ENCODE measurements at regions of chr11 and their contacts with region 1.

Region 1: DNA sequence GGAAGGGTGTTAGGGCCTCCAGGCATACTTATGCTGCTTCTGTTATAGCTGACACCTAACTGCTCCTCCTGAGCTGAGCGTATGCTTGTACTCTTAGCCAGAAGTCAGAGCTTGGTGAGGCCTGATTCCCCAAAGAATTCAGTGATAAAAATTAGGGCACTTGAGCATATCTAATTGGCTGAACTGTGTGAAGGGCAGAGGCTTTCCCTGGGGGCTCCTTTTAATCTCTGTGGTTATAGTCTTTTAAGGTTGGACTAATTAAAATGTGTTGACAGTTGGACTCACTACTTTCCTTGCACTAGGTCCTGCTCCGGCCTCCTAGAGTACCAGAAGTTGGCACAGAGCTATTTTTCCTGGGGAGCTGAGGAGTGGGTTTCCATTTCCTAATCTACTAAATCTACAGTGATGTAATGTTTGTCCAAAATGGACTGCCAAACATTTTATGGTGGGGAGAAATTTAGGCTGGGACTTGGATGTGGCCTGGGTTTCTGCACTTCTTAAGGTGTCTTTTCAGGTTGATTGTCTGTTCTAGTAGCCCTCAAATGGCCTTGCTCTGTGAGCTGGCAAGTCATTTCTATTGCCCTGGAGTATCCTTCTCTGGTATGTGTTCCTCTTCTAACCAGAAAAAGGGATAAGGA is 18.4 kb downstream of the STIM1 start:
- DNase-seq: no peak
- ATAC-seq: no peak
- H3K4me3 ChIP-seq: no peak overlapping the region
- H3K27ac ChIP-seq: no peak overlapping the region
- H3K4me1 ChIP-seq: peaks cover 50% of the 10 kb centered on the region
- H3K27me3 ChIP-seq: no peaks in the 10 kb centered on the region
- CTCF ChIP-seq: no peak
- EP300 ChIP-seq: no peak
- POLR2A ChIP-seq: no peak
- RAD21 ChIP-seq: no peak

Region 2: DNA sequence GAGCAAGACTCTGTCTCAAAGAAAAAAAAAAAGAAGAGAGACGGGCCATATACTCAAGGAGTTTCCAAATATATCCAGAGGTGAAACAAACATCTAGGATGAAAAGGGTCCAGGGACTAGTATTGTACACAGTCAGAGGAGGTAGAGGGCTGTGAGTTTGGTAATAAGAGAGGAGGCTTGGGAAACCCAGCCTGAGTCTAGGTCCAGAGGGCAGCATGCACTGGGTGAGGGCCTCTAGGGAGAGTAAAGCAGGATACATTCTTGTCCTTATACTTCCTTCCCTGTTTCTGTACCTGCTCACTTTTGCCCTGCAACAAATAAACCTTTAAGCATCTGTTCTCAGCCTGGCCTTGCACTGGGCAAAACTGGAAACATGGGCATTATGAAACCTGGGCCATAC is 13.2 kb after region 1 on chr11:
- CTCF ChIA-PET with region 1: interaction called, 1,047 read pairs
- POLR2A ChIA-PET with region 1: interaction called, 24 read pairs
- RAD21 ChIA-PET with region 1: interaction called, 33 read pairs
- SMC1A ChIA-PET with region 1: interaction called, 153 read pairs
- in situ Hi-C with region 1: no loop called
- intact Hi-C with region 1: no loop called
- DNase-seq: no peak
- ATAC-seq: no peak
- H3K4me3 ChIP-seq: no peak overlapping the region
- H3K27ac ChIP-seq: no peak overlapping the region
- H3K4me1 ChIP-seq: peaks cover 28% of the 10 kb centered on the region
- H3K27me3 ChIP-seq: no peaks in the 10 kb centered on the region
- CTCF ChIP-seq: no peak
- EP300 ChIP-seq: no peak
- POLR2A ChIP-seq: no peak
- RAD21 ChIP-seq: no peak

Region 3: DNA sequence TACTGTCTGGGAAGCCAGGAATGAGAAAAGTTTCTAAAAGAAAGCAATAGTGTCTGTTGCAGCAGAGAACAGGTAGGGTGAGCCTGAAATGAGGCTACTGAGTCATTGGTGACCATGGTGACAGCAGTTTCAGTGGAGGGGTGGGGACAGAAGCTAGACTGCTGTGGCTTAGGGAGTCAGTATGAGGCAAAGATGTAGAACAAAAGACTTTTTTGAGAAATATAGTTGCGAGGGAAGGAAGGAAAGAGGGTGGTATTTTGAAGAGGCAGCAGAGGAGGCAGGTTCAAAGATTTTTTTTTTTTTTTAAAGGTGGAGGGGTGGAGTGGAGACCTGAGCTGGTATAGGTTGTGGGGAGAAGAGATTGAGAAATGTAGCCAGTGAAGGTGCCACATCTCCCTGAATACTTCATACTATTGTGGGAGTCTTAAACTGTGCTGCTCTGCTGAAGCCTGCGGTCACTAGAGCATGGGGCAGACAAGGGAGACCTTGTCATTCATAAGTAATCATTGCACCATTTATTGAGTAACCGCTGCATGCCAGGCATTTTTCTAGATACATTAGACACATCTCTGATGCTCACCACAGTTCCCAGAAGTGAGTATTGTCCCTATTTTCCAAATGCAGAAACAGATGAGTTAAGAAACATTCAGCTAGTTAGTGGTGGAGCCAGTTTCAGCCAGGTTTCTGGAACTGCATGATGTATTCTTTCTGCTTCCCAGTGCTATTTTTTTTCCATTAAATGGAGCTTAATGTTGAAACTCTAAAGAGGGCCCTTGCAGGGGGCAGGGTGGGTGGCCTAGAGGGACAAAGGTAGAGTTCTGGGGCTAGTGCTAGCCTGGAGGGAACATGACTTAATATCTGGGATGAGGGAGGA is 31.5 kb after region 1 on chr11:
- CTCF ChIA-PET with region 1: interaction called, 5 read pairs
- POLR2A ChIA-PET with region 1: interaction called, 15 read pairs
- RAD21 ChIA-PET with region 1: interaction called, 8 read pairs
- SMC1A ChIA-PET with region 1: interaction called, 10 read pairs
- in situ Hi-C with region 1: no loop called
- intact Hi-C with region 1: no loop called
- DNase-seq: no peak
- ATAC-seq: peak; percentile 89
- H3K4me3 ChIP-seq: no peak overlapping the region
- H3K27ac ChIP-seq: no peak overlapping the region
- H3K4me1 ChIP-seq: peaks cover 51% of the 10 kb centered on the region
- H3K27me3 ChIP-seq: no peaks in the 10 kb centered on the region
- CTCF ChIP-seq: no peak
- EP300 ChIP-seq: no peak
- POLR2A ChIP-seq: no peak
- RAD21 ChIP-seq: no peak

Region 4: DNA sequence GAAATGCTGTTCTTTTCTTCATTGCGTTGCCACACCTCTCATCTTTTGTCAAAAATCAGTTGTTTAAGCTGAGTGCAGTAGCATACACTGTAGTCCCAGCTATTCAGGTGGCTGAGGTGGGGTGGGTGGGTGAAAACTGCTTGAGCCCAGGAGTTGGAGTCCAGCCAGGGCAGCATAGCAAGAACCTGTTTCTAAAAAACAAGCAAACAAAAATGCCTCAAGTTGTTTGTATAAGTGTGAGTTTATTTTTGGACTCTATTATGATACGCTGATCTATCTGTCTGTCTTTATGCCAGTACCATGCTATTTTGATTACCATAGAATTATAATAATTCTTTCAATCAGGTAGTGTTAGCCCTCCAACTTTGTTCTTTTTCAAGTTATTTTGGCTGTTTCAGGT is 158.3 kb after region 1 on chr11:
- CTCF ChIA-PET with region 1: no interaction called
- POLR2A ChIA-PET with region 1: no interaction called
- RAD21 ChIA-PET with region 1: no interaction called
- SMC1A ChIA-PET with region 1: no interaction called
- in situ Hi-C with region 1: no loop called
- intact Hi-C with region 1: no loop called
- DNase-seq: no peak
- ATAC-seq: no peak
- H3K4me3 ChIP-seq: no peak overlapping the region
- H3K27ac ChIP-seq: no peak overlapping the region
- H3K4me1 ChIP-seq: no peaks in the 10 kb centered on the region
- H3K27me3 ChIP-seq: no peaks in the 10 kb centered on the region
- CTCF ChIP-seq: no peak
- EP300 ChIP-seq: no peak
- POLR2A ChIP-seq: no peak
- RAD21 ChIP-seq: no peak

Measured in GM12878 (cell line).